CD8-positive, alpha-beta T cell (primary cell): ENCODE measurements at regions of chr22 and their contacts with region 1.

Region 1: GRCh38 chr22:42444077-42444904 is 12.1 kb upstream of the NFAM1 start:
- DNase-seq: peak; percentile 58 to 91 (median 78)
- ATAC-seq: peak; percentile 95
- H3K4me3 ChIP-seq: peak overlapping the region; percentile 45 to 47
- H3K4me3 Mint-ChIP-seq: peak overlapping the region; percentile 81
- H3K27ac ChIP-seq: peak overlapping the region; percentile 38 to 58
- H3K27ac Mint-ChIP-seq: peak overlapping the region; percentile 92
- H3K4me1 ChIP-seq: peaks cover 11% of the 10 kb centered on the region
- H3K4me1 Mint-ChIP-seq: peaks cover 22% of the 10 kb centered on the region
- H3K27me3 ChIP-seq: no peaks in the 10 kb centered on the region
- H3K27me3 Mint-ChIP-seq: no peaks in the 10 kb centered on the region
- CTCF ChIP-seq: peak; percentile 36

Region 2: GRCh38 chr22:41946629-41947423 is 497.5 kb before region 1 on chr22 and contains the start of gene CENPM:
- CTCF ChIA-PET with region 1: no interaction called
- POLR2A ChIA-PET with region 1: no interaction called
- intact Hi-C with region 1: loop called in 1 of 2 experiments (anchors 5 kb)
- DNase-seq: peak; percentile 65 to 89 (median 84)
- ATAC-seq: peak; percentile 94
- H3K4me3 ChIP-seq: peak within 1 kb of the TSS; percentile 75 to 87
- H3K4me3 Mint-ChIP-seq: peak within 1 kb of the TSS; percentile 91
- H3K27ac ChIP-seq: peak within 1 kb of the TSS in 1 of 2 experiments; percentile 4
- H3K27ac Mint-ChIP-seq: no peak within 1 kb of the TSS
- H3K4me1 ChIP-seq: peaks cover 19% of the 10 kb centered on the region
- H3K4me1 Mint-ChIP-seq: peaks cover 13% of the 10 kb centered on the region
- H3K27me3 ChIP-seq: peaks cover 0 to 2% of the 10 kb centered on the region in 2 experiments
- H3K27me3 Mint-ChIP-seq: no peaks in the 10 kb centered on the region
- CTCF ChIP-seq: no peak
- total RNA-seq, gene CENPM: 9.4 to 10.9 TPM

Region 3: DNA sequence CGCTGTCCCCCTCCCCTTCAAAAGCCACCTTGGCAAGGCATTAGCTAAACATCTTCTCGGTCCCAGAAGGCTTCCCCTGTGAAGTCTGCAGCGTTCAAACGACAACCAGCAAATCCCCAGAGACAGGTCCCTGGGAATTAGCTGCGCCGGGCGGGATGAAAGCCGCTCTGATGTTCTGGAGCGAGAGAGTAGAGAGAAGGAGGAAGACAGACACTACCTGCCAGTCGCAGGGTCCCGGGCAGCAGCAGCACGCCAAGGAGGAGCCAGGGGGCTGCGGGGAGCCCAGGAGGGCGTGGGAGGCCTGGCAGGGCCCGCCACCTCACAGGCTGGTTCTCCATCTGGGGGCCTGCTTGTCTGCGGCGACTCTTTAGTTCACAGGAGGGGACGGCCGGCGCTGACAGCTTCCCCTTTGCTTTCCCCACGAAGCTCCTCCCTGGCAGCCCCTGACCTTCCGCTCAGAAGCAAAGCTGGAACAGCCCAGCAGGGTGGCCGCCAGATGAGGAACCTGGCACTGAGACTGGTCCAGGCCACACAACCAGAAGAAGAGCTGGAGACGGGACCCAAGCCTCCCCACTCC is 12.2 kb before region 1 on chr22 and contains the start of gene NFAM1:
- CTCF ChIA-PET with region 1: interaction called, 24 read pairs
- POLR2A ChIA-PET with region 1: interaction called, 3 read pairs
- intact Hi-C with region 1: no loop called
- DNase-seq: no peak
- ATAC-seq: no peak
- H3K4me3 ChIP-seq: no peak within 1 kb of the TSS
- H3K4me3 Mint-ChIP-seq: no peak within 1 kb of the TSS
- H3K27ac ChIP-seq: no peak within 1 kb of the TSS
- H3K27ac Mint-ChIP-seq: no peak within 1 kb of the TSS
- H3K4me1 ChIP-seq: no peaks in the 10 kb centered on the region
- H3K4me1 Mint-ChIP-seq: no peaks in the 10 kb centered on the region
- H3K27me3 ChIP-seq: peaks cover 0 to 2% of the 10 kb centered on the region in 2 experiments
- H3K27me3 Mint-ChIP-seq: peaks cover 5% of the 10 kb centered on the region
- CTCF ChIP-seq: no peak
- total RNA-seq, gene NFAM1: not detected

Region 4: DNA sequence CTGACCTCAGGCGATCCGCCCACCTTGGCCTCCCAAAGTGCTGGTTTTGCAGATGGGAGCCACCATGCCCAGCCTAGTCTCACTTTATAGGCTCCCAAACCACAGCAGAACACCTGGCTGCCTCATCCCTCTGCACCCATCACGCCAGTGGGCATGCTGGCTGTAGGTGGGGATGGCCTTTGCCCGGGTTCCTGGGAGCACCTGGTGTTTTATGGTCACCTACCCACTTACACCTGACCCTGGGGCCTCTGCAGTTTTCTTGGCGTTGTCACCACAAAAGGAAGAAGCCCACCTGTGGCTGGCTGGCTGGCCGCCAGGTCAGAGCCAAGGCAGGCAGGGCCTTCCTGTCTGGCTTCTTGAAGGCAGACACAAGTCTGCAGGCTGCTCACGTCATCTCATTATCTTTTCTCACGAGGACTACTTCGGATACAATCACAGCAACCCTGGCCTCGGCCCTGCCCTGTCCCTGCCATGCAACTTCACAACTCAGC is 67.2 kb after region 1 on chr22:
- CTCF ChIA-PET with region 1: no interaction called
- POLR2A ChIA-PET with region 1: no interaction called
- intact Hi-C with region 1: no loop called
- DNase-seq: no peak
- ATAC-seq: no peak
- H3K4me3 ChIP-seq: no peak overlapping the region
- H3K4me3 Mint-ChIP-seq: no peak overlapping the region
- H3K27ac ChIP-seq: no peak overlapping the region
- H3K27ac Mint-ChIP-seq: no peak overlapping the region
- H3K4me1 ChIP-seq: no peaks in the 10 kb centered on the region
- H3K4me1 Mint-ChIP-seq: no peaks in the 10 kb centered on the region
- H3K27me3 ChIP-seq: no peaks in the 10 kb centered on the region
- H3K27me3 Mint-ChIP-seq: no peaks in the 10 kb centered on the region
- CTCF ChIP-seq: no peak